ENCODE measurements at regions of chr9 and their contacts with region 1.

Region 1: GRCh38 chr9:126301985-126302603 is 24.5 kb upstream of the MVB12B start:
- H3K4me3 ChIP-seq: no peak overlapping the region
- H3K27ac ChIP-seq: no peak overlapping the region
- H3K4me1 ChIP-seq: no peaks in the 10 kb centered on the region
- CTCF ChIP-seq: peak; percentile 43; the same call in 1 of the 2 replicates

Region 2: GRCh38 chr9:126108240-126108639 is 193.9 kb before region 1 on chr9:
- CTCF ChIA-PET with region 1: no interaction called
- POLR2A ChIA-PET with region 1: no interaction called
- H3K4me3 ChIP-seq: no peak overlapping the region
- H3K27ac ChIP-seq: no peak overlapping the region
- H3K4me1 ChIP-seq: no peaks in the 10 kb centered on the region
- CTCF ChIP-seq: no peak

Region 3: DNA sequence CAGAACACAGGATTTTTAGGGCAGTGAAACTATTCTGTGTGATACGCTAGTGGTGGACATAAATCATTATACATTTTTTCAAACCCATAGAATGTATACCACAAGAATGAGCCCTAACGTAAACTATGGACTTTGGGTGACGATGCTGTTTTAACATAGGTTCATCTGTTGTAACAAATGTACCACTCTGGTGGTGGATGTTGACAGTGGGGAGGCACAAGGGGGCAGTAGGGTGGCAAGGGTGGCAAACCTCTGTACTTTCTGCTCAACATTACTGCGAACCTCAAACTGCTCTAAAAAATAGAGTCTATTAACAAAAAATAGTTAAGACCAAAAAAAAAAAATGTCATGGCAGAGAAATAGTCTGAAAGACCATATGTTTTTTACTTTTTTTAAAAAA is 15.4 kb after region 1 on chr9:
- CTCF ChIA-PET with region 1: interaction called, 36 read pairs
- POLR2A ChIA-PET with region 1: no interaction called
- H3K4me3 ChIP-seq: no peak overlapping the region
- H3K27ac ChIP-seq: no peak overlapping the region
- H3K4me1 ChIP-seq: no peaks in the 10 kb centered on the region
- CTCF ChIP-seq: no peak

Region 4: GRCh38 chr9:126392662-126393371 is 90.7 kb after region 1 on chr9:
- CTCF ChIA-PET with region 1: interaction called, 48 read pairs
- POLR2A ChIA-PET with region 1: no interaction called
- H3K4me3 ChIP-seq: no peak overlapping the region
- H3K27ac ChIP-seq: no peak overlapping the region
- H3K4me1 ChIP-seq: no peaks in the 10 kb centered on the region
- CTCF ChIP-seq: no peak

Measured in HEK293 (cell line).